Heart right ventricle (tissue), 16 donors: ENCODE measurements at regions of chr2 and their contacts with region 1.

Region 1: DNA sequence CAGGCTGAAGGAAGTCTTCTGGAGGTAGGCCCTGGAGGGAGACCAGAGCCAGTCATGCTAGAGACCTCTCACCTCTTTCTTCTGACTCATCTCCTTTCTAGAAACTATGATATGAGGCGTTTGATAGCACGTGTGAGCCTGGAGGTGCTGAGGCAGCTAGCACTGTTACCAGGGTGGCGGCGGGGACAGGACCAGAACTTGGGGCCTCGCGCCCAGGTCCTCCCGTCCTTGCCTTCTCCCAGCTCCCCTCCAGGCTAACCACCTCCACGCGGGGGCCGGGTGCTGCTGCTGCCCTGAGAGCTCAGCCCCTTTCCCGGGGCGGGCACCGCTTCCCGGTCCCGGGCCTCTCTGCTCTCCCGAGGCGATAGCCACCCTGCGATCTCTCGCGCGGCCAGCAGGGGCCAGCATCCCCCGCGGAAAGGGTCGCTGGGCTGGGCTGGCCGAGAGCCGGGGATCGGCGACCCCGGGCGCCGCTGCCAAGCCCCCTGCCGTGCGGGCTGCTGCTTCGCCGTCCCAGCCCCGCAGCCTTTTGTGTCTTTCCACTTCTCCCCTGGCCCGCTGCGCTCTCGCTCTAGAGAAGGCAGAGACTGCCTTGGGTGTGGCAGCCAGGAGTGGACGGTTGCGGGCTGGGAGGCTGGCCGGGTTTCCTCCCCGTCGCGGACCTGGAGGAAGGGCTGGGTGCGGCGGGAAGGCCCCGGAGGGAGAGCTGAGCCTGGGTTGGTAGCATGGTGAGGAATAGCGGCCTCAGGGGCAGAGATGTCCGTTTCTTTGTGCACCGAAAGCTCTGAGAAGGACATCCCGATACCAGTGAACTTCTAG is 49.1 kb downstream of the TMEM17 start:
- DNase-seq: peak; percentile 62 to 79
- ATAC-seq: peak; percentile 86 to 94 (median 88)
- H3K4me3 ChIP-seq: peak overlapping the region; percentile 43 to 86 (median 72)
- H3K27ac ChIP-seq: peak overlapping the region; percentile 14 to 88 (median 78)
- H3K4me1 ChIP-seq: peaks cover 2 to 19% (median 11%) of the 10 kb centered on the region in 9 donors
- H3K27me3 ChIP-seq: no peaks in the 10 kb centered on the region
- CTCF ChIP-seq: peak; percentile 87 to 99 (median 99)

Region 2: GRCh38 chr2:61493523-61493942 is 963.4 kb before region 1 on chr2:
- intact Hi-C with region 1: no loop called
- DNase-seq: no peak
- ATAC-seq: no peak
- H3K4me3 ChIP-seq: no peak overlapping the region
- H3K27ac ChIP-seq: no peak overlapping the region
- H3K4me1 ChIP-seq: peaks cover 0 to 9% (median 0%) of the 10 kb centered on the region in 9 donors
- H3K27me3 ChIP-seq: no peaks in the 10 kb centered on the region
- CTCF ChIP-seq: no peak

Region 3: DNA sequence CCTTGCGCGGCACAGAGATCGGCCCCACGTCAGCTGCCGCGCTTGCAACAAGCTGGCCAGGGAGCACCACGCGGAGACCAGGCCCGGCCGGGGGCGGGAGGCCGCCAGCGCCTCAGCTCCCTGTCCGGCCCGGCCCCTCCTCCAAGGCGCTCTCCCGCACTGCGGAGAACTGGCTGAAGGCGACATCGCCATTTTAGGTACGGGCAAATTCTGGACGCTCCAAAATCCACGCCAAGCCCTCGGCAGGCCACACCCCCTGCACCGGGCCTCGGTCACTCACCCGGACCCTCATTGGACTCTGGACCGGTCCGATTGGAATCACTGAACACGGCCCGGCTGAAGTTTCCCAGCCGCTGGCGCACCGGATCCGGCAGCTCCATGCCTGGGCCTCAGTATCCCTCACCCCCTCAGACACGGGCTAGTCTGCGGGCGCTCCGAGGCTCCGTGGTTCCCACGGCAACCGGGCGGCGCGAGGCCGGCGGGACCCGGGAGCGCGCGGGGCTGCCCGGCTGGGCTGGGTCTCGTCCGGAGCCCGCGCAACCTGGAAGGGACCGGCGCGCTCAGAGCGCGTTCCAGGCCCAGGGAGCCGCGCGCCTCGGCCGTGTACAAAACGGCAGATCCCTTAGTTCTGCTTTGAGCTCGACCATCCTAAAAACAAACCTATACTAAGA is 49.0 kb after region 1 on chr2 and contains the start of gene TMEM17:
- intact Hi-C with region 1: loop called in 3 of 10 experiments (anchors 5 kb)
- DNase-seq: peak; percentile 93 to 96
- ATAC-seq: peak; percentile 97 to 100 (median 98)
- H3K4me3 ChIP-seq: peak within 1 kb of the TSS; percentile 56 to 84 (median 74)
- H3K27ac ChIP-seq: peak within 1 kb of the TSS; percentile 81 to 97 (median 88)
- H3K4me1 ChIP-seq: peaks cover 0 to 15% (median 12%) of the 10 kb centered on the region in 9 donors
- H3K27me3 ChIP-seq: no peaks in the 10 kb centered on the region
- CTCF ChIP-seq: no peak
- total RNA-seq, gene TMEM17: 1.2 to 3.2 (median 2.2) TPM

Region 4: DNA sequence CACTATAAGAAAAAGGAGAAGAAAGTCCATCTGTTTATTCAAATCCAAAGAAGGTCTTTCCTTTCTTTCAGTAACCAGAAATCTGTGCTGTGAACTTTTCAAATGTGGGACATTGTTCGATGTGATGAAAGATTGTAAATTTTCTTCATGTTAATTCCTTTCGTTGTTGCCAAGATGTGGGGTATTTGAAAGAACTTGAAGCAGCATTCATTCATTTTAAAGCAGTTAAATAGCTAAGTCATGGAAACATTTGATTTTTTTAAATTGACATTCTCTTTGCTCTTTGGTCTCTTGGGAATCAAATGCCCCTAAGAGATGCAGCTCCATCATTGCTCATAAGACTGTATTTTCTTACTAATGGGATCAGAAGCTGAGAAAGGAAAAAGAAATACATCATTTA is 154.9 kb after region 1 on chr2:
- intact Hi-C with region 1: no loop called
- DNase-seq: no peak
- ATAC-seq: no peak
- H3K4me3 ChIP-seq: no peak overlapping the region
- H3K27ac ChIP-seq: no peak overlapping the region
- H3K4me1 ChIP-seq: no peaks in the 10 kb centered on the region
- H3K27me3 ChIP-seq: no peaks in the 10 kb centered on the region
- CTCF ChIP-seq: no peak

Region 5: DNA sequence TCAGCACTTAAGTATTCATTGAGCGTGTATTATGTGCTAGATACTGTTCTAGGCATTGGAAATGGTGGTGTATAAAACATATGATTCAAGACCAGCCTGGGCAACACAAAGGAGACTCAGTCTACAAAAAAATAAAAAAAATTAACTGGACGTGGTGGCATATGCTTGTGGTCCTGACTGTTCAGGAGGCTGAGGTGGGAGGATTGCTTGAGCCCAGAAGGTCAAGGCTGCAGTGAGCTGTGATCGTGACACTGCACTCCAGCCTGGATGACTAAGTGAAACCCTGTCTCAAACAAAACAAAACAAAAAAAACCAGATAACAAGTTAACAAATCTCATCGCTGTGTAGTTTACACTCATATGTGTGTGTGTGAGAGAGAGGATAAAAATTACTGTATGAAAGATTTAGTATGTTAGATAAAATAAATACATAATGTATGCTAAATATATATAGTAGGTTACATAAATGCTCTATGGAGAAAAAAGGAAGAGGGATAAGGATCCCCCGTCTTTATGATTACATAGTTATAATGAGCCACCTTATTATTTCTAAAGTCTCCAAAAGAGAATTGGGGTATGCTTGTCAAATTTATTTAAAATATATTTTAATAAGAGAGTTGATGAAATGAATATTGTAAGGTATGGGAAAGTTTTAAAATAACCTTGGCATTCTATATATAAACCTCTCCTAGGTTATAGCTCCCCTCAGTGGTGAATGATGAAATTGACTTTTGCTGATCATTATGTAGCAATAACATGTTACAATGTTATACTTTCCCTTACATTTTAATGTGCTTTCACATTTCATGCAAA is 317.8 kb after region 1 on chr2:
- intact Hi-C with region 1: loop called (anchors 1 to 5 kb)
- DNase-seq: no peak
- ATAC-seq: peak in 6 of 8 donors; percentile 43 to 75 (median 57)
- H3K4me3 ChIP-seq: no peak overlapping the region
- H3K27ac ChIP-seq: no peak overlapping the region
- H3K4me1 ChIP-seq: peaks cover 0 to 4% (median 0%) of the 10 kb centered on the region in 9 donors
- H3K27me3 ChIP-seq: no peaks in the 10 kb centered on the region
- CTCF ChIP-seq: peak; percentile 66 to 95 (median 83)